A549 (cell line): ENCODE measurements at regions of chr1 and their contacts with region 1.

Region 1: GRCh38 chr1:40877698-40878097 is 15.5 kb upstream of the CITED4 start:
- DNase-seq: peak in 1 of 2 experiments; percentile 77
- ATAC-seq: peak; percentile 62 to 73
- H3K4me3 ChIP-seq: no peak overlapping the region
- H3K27ac ChIP-seq: peak overlapping the region; percentile 86 to 95
- H3K4me1 ChIP-seq: peaks cover 44% of the 10 kb centered on the region
- CTCF ChIP-seq: no peak
- EP300 ChIP-seq: peak in 1 of 2 experiments; percentile 20; a peak in 2 of 5 replicates
- POLR2A ChIP-seq: no peak
- RAD21 ChIP-seq: 0 out of 5 replicates have a peak, but pooled peaks of 1 of the 2 experiments have one; percentile 14

Region 2: DNA sequence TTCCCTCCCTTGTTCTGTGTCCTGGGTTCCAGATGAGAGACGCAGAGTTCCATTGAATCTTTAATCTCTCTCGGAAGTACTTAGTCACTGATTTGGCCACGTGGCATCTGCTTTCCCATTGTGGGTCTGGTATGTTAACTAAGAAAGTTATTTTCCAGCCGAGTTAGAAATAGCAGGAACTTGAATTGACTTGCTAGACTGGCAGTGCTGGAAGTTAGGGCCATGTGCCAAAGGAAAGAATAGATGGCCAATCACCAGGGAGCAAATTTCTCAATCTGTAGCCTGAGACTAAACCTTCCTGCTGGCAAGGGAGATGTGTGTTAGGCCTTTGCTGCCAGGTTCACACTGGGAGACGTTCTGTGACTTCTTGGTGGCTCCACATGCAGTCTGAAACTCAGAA is 168.0 kb after region 1 on chr1:
- CTCF ChIA-PET with region 1: no interaction called
- POLR2A ChIA-PET with region 1: no interaction called
- DNase-seq: no peak
- ATAC-seq: no peak
- H3K4me3 ChIP-seq: no peak overlapping the region
- H3K27ac ChIP-seq: 0 out of 6 replicates have a peak overlapping the region, but pooled peaks of 1 of the 2 experiments have one; percentile 16
- H3K4me1 ChIP-seq: peaks cover 9% of the 10 kb centered on the region; the same call in 2 of the 3 replicates
- CTCF ChIP-seq: no peak
- EP300 ChIP-seq: no peak
- POLR2A ChIP-seq: no peak
- RAD21 ChIP-seq: no peak

Region 3: GRCh38 chr1:41333146-41333784 is 455.6 kb after region 1 on chr1:
- CTCF ChIA-PET with region 1: no interaction called
- POLR2A ChIA-PET with region 1: interaction called, 10 read pairs
- DNase-seq: peak in 1 of 2 experiments; percentile 32
- ATAC-seq: peak in 1 of 2 experiments; percentile 54; a peak in 3 of 6 replicates
- H3K4me3 ChIP-seq: no peak overlapping the region
- H3K27ac ChIP-seq: no peak overlapping the region
- H3K4me1 ChIP-seq: no peaks in the 10 kb centered on the region
- CTCF ChIP-seq: no peak
- EP300 ChIP-seq: no peak
- POLR2A ChIP-seq: no peak
- RAD21 ChIP-seq: no peak